ENCODE measurements at regions of chr14 and their contacts with region 1.

Region 1: DNA sequence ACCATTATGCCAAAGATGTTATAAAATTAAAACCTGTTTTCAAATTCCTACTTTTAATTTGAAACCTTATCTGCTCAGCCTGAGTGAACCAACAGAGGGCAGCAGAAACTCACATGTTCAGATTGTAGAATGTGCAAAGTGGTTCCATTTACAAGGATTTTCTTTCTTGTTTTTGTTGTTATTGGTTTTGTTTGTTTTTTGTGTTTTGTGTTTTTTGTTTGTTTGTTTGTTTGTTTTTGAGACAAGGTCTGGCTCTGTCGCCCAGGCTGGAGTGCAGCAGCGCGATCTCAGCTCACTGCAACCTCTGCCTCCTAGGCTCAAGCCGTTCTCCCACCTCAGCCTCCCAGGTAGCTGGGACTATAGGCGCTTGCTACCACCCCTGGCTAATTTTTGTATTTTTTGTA is 22.8 kb upstream of the GARIN2 start:
- DNase-seq: peak in 1 of 2 experiments; percentile 65
- H3K4me3 ChIP-seq: no peak overlapping the region
- H3K4me1 ChIP-seq: peaks cover 8% of the 10 kb centered on the region
- H3K27me3 ChIP-seq: no peaks in the 10 kb centered on the region

Region 2: GRCh38 chr14:67010602-67011001 is 155.8 kb before region 1 on chr14:
- in situ Hi-C with region 1: no loop called
- DNase-seq: no peak
- H3K4me3 ChIP-seq: no peak overlapping the region
- H3K4me1 ChIP-seq: no peaks in the 10 kb centered on the region
- H3K27me3 ChIP-seq: no peaks in the 10 kb centered on the region

Region 3: DNA sequence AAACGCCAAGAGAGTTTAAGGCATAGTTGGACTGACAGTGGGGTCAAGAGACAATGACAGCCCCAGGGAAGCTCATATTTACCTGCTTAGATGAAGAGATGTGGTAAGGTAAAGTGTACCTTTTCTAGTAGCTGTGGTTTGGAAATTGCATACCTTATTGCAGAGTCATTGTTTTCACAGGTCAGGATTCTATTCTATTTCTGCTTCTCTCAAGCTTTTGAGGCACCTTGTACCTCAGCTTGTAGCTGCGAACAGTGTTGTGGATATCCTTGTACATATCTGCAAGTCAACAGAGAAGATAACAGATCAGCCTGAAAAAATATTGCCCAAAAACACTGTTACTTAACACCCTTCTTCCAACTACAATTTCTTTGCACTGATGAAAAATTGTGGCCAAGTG is 145.5 kb after region 1 on chr14:
- in situ Hi-C with region 1: loop called (anchors 10 kb)
- DNase-seq: no peak
- H3K4me3 ChIP-seq: no peak overlapping the region
- H3K4me1 ChIP-seq: no peaks in the 10 kb centered on the region
- H3K27me3 ChIP-seq: no peaks in the 10 kb centered on the region

Measured in HAP-1 (cell line).